A673 (cell line): ENCODE measurements at regions of chr11 and their contacts with region 1.

Region 1: DNA sequence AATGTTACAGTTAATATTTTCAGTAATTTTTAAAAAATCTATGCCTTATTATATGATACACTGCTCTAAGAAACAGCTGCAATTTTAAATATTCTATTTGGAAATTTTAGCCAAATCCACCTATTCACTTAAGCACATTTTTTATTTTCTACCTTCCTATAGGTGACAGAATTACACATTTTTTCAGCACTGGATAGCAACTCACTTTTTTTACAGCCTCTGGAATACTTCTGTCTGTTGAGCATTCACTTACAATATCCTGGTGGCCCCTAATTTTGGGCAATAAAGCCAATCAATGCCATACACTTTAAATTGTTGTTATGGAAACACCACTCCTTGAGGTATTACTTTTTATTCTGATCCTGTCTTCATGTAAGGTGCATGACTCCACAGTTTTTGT is 22.4 kb downstream of the OR4A15 start:
- DNase-seq: no peak
- H3K4me3 ChIP-seq: no peak overlapping the region
- H3K27ac ChIP-seq: no peak overlapping the region
- H3K4me1 ChIP-seq: no peaks in the 10 kb centered on the region
- H3K27me3 ChIP-seq: no peaks in the 10 kb centered on the region
- CTCF ChIP-seq: no peak

Region 2: DNA sequence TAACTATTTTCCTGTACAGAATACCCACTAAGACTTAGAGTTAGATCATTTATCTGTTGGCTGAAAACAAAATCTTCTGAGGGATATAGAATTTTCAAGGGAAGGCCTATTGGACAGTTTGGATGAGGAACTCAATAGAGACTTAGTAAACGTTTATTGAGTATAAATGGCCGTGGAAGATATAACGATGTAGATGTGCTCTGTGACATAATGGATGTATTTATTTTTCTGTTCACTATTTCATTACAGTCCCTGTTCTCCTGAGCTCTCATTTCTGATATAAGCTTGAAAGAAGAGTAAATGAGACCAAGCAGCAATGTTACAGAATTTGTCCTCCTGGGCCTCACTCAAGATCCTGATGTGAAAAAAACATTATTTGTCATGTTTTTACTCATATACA is 47.3 kb before region 1 on chr11 and contains the start of gene OR4A16:
- CTCF ChIA-PET with region 1: no interaction called
- POLR2A ChIA-PET with region 1: no interaction called
- intact Hi-C with region 1: no loop called
- DNase-seq: no peak
- H3K4me3 ChIP-seq: no peak within 1 kb of the TSS
- H3K27ac ChIP-seq: no peak within 1 kb of the TSS
- H3K4me1 ChIP-seq: no peaks in the 10 kb centered on the region
- H3K27me3 ChIP-seq: no peaks in the 10 kb centered on the region
- CTCF ChIP-seq: no peak
- total RNA-seq, gene OR4A16: 1.7 and 3.0 TPM in 2 replicates

Region 3: DNA sequence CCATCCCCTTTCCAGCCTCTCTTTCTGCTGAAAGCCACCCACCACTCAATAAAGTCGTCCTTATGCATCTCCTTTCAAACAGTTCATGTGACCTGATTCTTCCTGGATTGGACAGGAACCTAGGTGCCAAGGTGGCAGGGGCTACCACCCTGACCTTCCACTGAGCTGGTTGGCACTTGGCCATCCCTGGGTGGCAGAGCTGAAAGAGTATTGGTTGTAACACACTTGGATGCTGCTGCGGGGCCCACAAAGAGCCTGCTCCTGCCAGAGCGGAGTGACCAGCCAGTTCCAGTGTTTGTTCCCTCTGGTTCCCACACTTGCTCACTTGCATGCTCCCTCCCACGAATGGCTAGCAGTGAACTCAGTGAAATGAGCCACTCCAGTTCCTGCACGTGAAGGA is 106.9 kb after region 1 on chr11:
- CTCF ChIA-PET with region 1: no interaction called
- POLR2A ChIA-PET with region 1: no interaction called
- intact Hi-C with region 1: loop called (anchors 10 kb)
- DNase-seq: no peak
- H3K4me3 ChIP-seq: no peak overlapping the region
- H3K27ac ChIP-seq: no peak overlapping the region
- H3K4me1 ChIP-seq: no peaks in the 10 kb centered on the region
- H3K27me3 ChIP-seq: no peaks in the 10 kb centered on the region
- CTCF ChIP-seq: no peak